ENCODE measurements at regions of chr5 and their contacts with region 1.

Region 1: GRCh38 chr5:56909294-56910209 is at the start of gene SETD9:
- DNase-seq: peak; percentile 93
- ATAC-seq: peak; percentile 85
- H3K4me3 Mint-ChIP-seq: peak within 1 kb of the TSS; percentile 96
- H3K27ac Mint-ChIP-seq: peak within 1 kb of the TSS; percentile 96
- H3K4me1 Mint-ChIP-seq: peaks cover 20% of the 10 kb centered on the region
- H3K27me3 Mint-ChIP-seq: no peaks in the 10 kb centered on the region
- CTCF ChIP-seq: no peak
- total RNA-seq, gene SETD9: 3.4 and 6.2 TPM in 2 replicates

Region 2: GRCh38 chr5:55307383-55308253 is 1601.9 kb before region 1 on chr5 and contains the starts of genes DHX29 and MTREX:
- CTCF ChIA-PET with region 1: no interaction called
- POLR2A ChIA-PET with region 1: no interaction called
- intact Hi-C with region 1: loop called (anchors 5 kb)
- DNase-seq: peak; percentile 82
- ATAC-seq: peak; percentile 92
- H3K4me3 Mint-ChIP-seq: no peak within 1 kb of the TSS
- H3K27ac Mint-ChIP-seq: no peak within 1 kb of the TSS
- H3K4me1 Mint-ChIP-seq: peaks cover 31% of the 10 kb centered on the region
- H3K27me3 Mint-ChIP-seq: no peaks in the 10 kb centered on the region
- CTCF ChIP-seq: no peak
- total RNA-seq, gene DHX29: 17.4 TPM in 2 replicates
- total RNA-seq, gene MTREX: 98.8 and 106 TPM in 2 replicates

Region 3: GRCh38 chr5:55711968-55712859 is 1197.3 kb before region 1 on chr5 and contains the start of gene SLC38A9:
- CTCF ChIA-PET with region 1: no interaction called
- POLR2A ChIA-PET with region 1: no interaction called
- intact Hi-C with region 1: loop called (anchors 5 kb)
- DNase-seq: peak; percentile 91
- ATAC-seq: peak; percentile 100
- H3K4me3 Mint-ChIP-seq: peak within 1 kb of the TSS; percentile 100
- H3K27ac Mint-ChIP-seq: peak within 1 kb of the TSS; percentile 92
- H3K4me1 Mint-ChIP-seq: peaks cover 17% of the 10 kb centered on the region
- H3K27me3 Mint-ChIP-seq: no peaks in the 10 kb centered on the region
- CTCF ChIP-seq: no peak
- total RNA-seq, gene SLC38A9: 26.6 and 29.9 TPM in 2 replicates

Region 4: DNA sequence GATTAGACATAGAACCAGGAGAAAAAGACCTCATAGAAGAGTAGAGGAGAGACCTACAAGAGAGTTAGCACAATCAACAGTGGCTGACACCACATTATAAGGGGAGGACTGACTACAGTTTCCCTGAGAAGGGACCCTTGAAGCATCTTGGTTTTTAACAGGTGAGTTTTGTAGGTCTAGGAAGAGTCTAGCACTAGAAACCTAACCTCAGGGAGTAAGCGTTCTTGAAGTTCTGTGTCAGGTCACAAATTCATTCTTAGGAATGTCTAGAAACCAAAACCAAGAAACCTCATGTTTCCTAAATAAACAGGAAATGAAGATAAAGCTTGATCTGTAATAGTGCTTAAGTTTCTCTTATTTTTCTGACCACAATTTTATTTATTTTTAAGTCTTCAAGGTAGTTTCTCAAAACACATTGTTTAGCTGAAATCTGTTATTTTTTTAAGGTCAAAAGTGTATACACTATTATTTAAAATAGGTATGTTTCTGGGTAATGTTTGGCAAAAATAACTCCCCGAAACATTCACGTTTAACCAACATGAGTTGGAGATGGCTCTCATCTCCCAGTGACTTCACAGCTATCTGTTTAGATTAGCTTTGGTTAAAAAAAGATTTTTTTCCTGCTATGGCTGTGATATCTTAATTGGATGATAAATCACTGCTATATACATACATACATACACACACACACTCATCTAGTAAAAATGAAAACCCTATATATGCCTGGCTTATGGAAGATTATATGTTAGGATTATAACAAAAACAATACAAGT is 57.1 kb before region 1 on chr5:
- CTCF ChIA-PET with region 1: no interaction called
- POLR2A ChIA-PET with region 1: no interaction called
- intact Hi-C with region 1: no loop called
- DNase-seq: no peak
- ATAC-seq: no peak
- H3K4me3 Mint-ChIP-seq: peak overlapping the region; percentile 54
- H3K27ac Mint-ChIP-seq: peak overlapping the region; percentile 8
- H3K4me1 Mint-ChIP-seq: peaks cover 95% of the 10 kb centered on the region
- H3K27me3 Mint-ChIP-seq: no peaks in the 10 kb centered on the region
- CTCF ChIP-seq: no peak

Region 5: DNA sequence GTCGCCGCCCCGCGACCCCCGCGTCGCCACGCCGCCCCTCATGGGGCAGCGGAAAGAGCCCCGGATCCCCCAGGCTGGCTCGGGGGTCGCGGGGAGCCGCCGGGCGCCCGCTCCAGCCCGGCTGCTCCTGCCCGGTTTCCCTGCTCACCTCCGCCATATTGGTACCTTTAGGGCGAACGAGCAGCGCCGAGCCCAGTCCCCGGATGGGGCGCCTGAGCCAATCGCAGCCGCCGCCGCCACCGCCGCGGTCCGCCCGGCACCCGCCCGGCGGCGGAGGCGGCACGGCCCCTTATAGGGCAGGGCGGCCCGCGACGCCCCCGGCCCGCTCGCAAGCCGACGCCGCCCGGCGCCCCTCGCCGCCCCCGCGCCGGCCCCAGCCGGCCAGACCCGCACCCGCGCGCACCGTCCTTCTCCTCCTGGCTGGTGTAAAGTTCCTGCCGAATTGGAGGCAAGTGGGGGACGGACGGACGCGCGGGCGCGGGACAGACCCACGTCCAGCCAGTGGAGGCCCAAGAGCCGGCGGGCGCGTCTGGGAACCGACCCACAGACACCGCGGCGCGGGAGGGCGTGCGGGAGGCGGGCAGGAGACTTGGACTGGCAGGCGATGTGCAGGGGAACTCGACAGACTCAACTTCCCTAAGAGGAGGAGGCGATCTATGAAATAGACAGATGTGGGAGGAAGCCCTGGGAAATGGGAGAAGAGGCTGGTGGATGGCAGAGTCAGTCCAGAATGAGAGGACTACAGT is 42.6 kb after region 1 on chr5 and contains the start of gene MIER3:
- CTCF ChIA-PET with region 1: no interaction called
- POLR2A ChIA-PET with region 1: interaction called, 20 read pairs
- intact Hi-C with region 1: loop called (anchors 1 kb)
- DNase-seq: peak; percentile 75
- ATAC-seq: peak; percentile 96
- H3K4me3 Mint-ChIP-seq: peak within 1 kb of the TSS; percentile 95
- H3K27ac Mint-ChIP-seq: peak within 1 kb of the TSS; percentile 80
- H3K4me1 Mint-ChIP-seq: peaks cover 20% of the 10 kb centered on the region
- H3K27me3 Mint-ChIP-seq: peaks cover 7% of the 10 kb centered on the region
- CTCF ChIP-seq: no peak
- total RNA-seq, gene MIER3: 22.2 and 23.5 TPM in 2 replicates

Region 6: DNA sequence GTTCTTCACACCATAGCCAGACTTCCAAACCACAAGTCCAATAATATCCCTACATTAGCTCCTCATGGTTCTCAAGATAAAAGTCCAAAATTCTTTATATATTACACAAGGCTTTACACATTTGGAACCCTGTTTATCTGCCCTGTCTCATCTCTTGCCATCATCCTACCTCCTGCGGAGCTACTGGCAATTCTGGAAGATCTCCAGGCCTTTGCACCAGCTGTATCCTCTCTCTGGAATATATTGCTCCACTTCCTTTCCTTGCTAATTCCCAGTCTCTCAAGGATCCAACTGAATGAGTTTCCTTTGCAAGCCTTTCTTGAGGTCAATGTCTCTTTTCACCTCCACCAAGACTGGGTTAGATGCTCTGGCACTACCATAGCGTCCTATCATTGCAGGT is 83.7 kb after region 1 on chr5:
- CTCF ChIA-PET with region 1: no interaction called
- POLR2A ChIA-PET with region 1: no interaction called
- intact Hi-C with region 1: loop called (anchors 5 kb)
- DNase-seq: no peak
- ATAC-seq: no peak
- H3K4me3 Mint-ChIP-seq: no peak overlapping the region
- H3K27ac Mint-ChIP-seq: no peak overlapping the region
- H3K4me1 Mint-ChIP-seq: no peaks in the 10 kb centered on the region
- H3K27me3 Mint-ChIP-seq: no peaks in the 10 kb centered on the region
- CTCF ChIP-seq: no peak

Region 7: GRCh38 chr5:58182287-58182841 is 1272.8 kb after region 1 on chr5:
- CTCF ChIA-PET with region 1: no interaction called
- POLR2A ChIA-PET with region 1: no interaction called
- intact Hi-C with region 1: no loop called
- DNase-seq: no peak
- ATAC-seq: no peak
- H3K4me3 Mint-ChIP-seq: no peak overlapping the region
- H3K27ac Mint-ChIP-seq: no peak overlapping the region
- H3K4me1 Mint-ChIP-seq: no peaks in the 10 kb centered on the region
- H3K27me3 Mint-ChIP-seq: no peaks in the 10 kb centered on the region
- CTCF ChIP-seq: no peak